Left cardiac atrium (tissue), 4 donors: ENCODE measurements at regions of chr6 and their contacts with region 1.

Region 1: GRCh38 chr6:47631269-47631772 is 67.1 kb upstream of the ADGRF4 start:
- DNase-seq: no peak
- ATAC-seq: peak; percentile 74 to 85

Region 2: GRCh38 chr6:47733879-47734558 is 102.7 kb after region 1 on chr6:
- intact Hi-C with region 1: loop called in 1 of 2 experiments (anchors 1 kb)
- DNase-seq: no peak
- ATAC-seq: no peak

Region 3: DNA sequence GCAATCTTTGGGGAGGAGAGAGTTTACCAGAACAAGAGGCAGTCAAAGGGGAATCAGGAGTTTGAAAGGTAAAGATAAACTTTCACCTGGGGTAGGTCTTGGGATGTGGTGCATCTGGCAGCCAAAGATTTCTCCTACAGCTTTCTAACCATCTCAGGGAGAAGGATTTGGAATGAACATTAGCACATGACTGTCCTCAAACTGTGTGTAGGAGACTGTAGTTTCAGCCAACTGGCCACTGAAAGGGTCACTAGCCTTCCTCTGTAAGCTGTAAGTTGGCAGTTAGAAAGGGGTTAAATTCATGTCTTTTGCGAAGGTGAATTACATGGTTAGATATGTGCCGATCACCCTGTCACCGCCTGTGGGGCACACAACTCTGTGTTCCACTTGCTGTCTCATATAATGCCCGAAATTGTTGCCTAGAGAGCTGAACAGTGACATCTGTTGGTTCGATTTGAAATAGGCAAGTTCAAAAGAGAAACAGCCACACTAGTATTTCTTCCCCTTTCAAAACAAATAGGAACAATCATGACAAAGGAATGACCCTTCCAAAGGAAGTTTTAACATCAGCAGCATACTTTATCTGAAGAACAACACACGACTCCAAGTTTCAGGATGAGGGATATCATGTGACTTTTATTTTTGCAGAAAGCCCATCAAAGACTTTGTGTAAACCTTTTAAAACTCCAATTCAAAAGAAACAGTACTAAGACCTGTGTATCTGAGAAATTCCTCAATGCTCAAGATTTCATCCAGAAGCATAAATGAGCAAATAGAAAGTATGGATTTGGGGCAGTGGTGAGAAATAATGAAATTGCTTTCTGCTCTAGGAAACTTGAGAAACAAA is 149.4 kb after region 1 on chr6:
- intact Hi-C with region 1: loop called (anchors 1 to 5 kb)
- DNase-seq: no peak
- ATAC-seq: peak; percentile 89 to 90

Region 4: DNA sequence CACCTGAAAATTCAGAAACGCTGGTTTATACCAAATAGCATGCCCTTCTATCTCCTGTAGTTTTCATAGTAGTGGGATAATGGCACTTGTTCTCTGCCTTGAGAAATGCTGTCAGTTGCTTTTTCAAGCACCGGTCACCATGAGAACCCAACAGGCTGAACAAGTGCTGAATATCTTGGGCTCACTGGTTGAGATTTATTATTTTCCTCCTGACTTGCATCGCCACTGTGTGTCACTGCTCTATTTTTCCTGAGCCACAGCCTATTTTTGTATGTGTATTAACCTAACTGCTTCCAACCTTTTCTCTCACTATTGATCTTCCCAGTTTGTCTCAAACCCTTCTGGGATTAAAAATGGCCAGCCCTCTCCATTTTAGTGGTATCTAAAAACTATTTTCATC is 222.4 kb after region 1 on chr6:
- intact Hi-C with region 1: no loop called
- DNase-seq: no peak
- ATAC-seq: no peak